Activated naive CD4-positive, alpha-beta T cell treated with anti-CD3 and anti-CD28 coated beads for 36 hours (primary cell): ENCODE measurements at regions of chr3 and their contacts with region 1.

Region 1: DNA sequence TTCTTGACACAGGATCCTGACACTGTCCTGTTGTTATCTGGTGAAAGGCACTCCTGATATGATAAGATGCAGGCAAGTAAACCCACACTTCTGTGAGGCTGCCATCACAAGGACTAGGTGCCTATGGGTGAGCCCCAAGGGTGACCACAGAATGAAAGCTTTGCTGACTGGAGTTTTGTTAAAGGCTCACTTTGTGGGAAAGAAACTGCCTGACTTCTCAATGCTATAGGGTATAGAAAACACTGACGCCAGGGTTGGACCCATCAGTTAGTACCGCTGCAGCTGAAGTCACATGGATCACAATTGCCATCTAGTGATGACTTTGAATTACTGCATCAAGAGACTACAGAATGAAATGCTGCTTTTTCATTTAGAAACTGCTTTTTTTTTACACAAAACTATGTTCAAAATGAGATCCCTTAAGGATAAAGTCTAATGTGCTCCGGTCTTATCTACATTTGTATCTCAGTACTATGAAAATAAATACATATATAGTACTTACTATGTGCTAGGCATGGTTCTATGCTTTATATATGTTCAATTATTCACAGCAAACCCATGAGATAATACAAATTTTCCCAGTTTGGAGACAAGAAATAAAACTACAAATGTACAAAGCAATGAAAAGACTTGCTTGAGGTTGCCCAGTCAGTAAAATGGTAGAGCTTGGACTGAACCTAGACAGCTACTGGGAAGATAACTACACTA is 64.2 kb upstream of the CMSS1 start:
- DNase-seq: peak; percentile 28
- H3K4me3 Mint-ChIP-seq: no peak overlapping the region
- H3K27ac Mint-ChIP-seq: no peak overlapping the region
- H3K4me1 Mint-ChIP-seq: no peaks in the 10 kb centered on the region
- H3K27me3 Mint-ChIP-seq: peaks cover 4% of the 10 kb centered on the region

Region 2: DNA sequence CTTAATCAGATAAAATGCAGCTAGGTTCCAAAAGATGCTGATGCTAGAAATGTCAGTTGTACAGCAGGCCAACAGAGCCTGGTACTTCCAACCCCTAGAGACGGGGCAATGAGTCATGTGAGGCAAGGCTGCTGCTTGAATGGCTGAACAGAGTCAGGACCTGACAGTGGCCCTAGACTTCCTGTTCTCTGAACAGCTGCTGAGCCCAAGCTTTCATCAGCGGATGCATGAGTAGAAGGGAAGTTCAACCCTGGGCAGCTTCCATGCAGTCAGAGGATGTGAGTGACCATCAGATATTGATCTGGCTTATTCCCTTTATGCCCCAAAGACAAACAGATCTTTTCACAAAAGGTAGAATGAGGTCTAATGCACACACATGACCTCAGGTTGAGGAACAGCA is 398.0 kb before region 1 on chr3:
- CTCF ChIA-PET with region 1: no interaction called
- intact Hi-C with region 1: no loop called
- DNase-seq: no peak
- H3K4me3 Mint-ChIP-seq: no peak overlapping the region
- H3K27ac Mint-ChIP-seq: no peak overlapping the region
- H3K4me1 Mint-ChIP-seq: no peaks in the 10 kb centered on the region
- H3K27me3 Mint-ChIP-seq: no peaks in the 10 kb centered on the region

Region 3: GRCh38 chr3:99499235-99500158 is 253.9 kb before region 1 on chr3:
- CTCF ChIA-PET with region 1: interaction called, 4 read pairs
- intact Hi-C with region 1: loop called (anchors 1 kb)
- DNase-seq: peak; percentile 16
- H3K4me3 Mint-ChIP-seq: no peak overlapping the region
- H3K27ac Mint-ChIP-seq: no peak overlapping the region
- H3K4me1 Mint-ChIP-seq: no peaks in the 10 kb centered on the region
- H3K27me3 Mint-ChIP-seq: no peaks in the 10 kb centered on the region

Region 4: GRCh38 chr3:99645277-99646106 is 107.9 kb before region 1 on chr3:
- CTCF ChIA-PET with region 1: interaction called, 4 read pairs
- intact Hi-C with region 1: loop called (anchors 1 kb)
- DNase-seq: no peak
- H3K4me3 Mint-ChIP-seq: no peak overlapping the region
- H3K27ac Mint-ChIP-seq: no peak overlapping the region
- H3K4me1 Mint-ChIP-seq: no peaks in the 10 kb centered on the region
- H3K27me3 Mint-ChIP-seq: peaks cover 20% of the 10 kb centered on the region

Region 5: GRCh38 chr3:99678023-99678422 is 75.4 kb before region 1 on chr3:
- CTCF ChIA-PET with region 1: no interaction called
- intact Hi-C with region 1: no loop called
- DNase-seq: no peak
- H3K4me3 Mint-ChIP-seq: no peak overlapping the region
- H3K27ac Mint-ChIP-seq: no peak overlapping the region
- H3K4me1 Mint-ChIP-seq: no peaks in the 10 kb centered on the region
- H3K27me3 Mint-ChIP-seq: peaks cover 5% of the 10 kb centered on the region